ENCODE measurements at regions of chr2 and their contacts with region 1.

Region 1: GRCh38 chr2:152335010-152335725 is at the start of gene FMNL2:
- DNase-seq: peak; percentile 89 to 93
- H3K4me3 ChIP-seq: peak within 1 kb of the TSS; percentile 96 to 98
- H3K27ac ChIP-seq: peak within 1 kb of the TSS; percentile 89 to 93
- H3K4me1 ChIP-seq: peaks cover 0 to 34% (median 9%) of the 10 kb centered on the region in 4 donors
- H3K27me3 ChIP-seq: no peaks in the 10 kb centered on the region
- CTCF ChIP-seq: peak in 1 of 2 experiments; percentile 10

Region 2: GRCh38 chr2:152189622-152190495 is 145.3 kb before region 1 on chr2:
- intact Hi-C with region 1: loop called (anchors 10 kb)
- DNase-seq: peak in 1 of 2 donors; percentile 46
- H3K4me3 ChIP-seq: no peak overlapping the region
- H3K27ac ChIP-seq: no peak overlapping the region
- H3K4me1 ChIP-seq: peaks cover 0 to 5% (median 0%) of the 10 kb centered on the region in 4 donors
- H3K27me3 ChIP-seq: no peaks in the 10 kb centered on the region
- CTCF ChIP-seq: peak; percentile 88 to 89

Region 3: GRCh38 chr2:152222975-152223637 is 112.1 kb before region 1 on chr2:
- intact Hi-C with region 1: loop called (anchors 10 kb)
- DNase-seq: peak; percentile 73 to 74
- H3K4me3 ChIP-seq: no peak overlapping the region
- H3K27ac ChIP-seq: peak overlapping the region; percentile 67 to 71
- H3K4me1 ChIP-seq: peaks cover 0 to 30% (median 14%) of the 10 kb centered on the region in 4 donors
- H3K27me3 ChIP-seq: no peaks in the 10 kb centered on the region
- CTCF ChIP-seq: no peak

Region 4: GRCh38 chr2:152395103-152395502 is 59.9 kb after region 1 on chr2:
- intact Hi-C with region 1: loop called (anchors 5 kb)
- DNase-seq: peak in 1 of 2 donors; percentile 33
- H3K4me3 ChIP-seq: peak overlapping the region in 1 of 2 donors; percentile 45
- H3K27ac ChIP-seq: peak overlapping the region; percentile 65 to 72
- H3K4me1 ChIP-seq: peaks cover 0 to 40% (median 24%) of the 10 kb centered on the region in 4 donors
- H3K27me3 ChIP-seq: no peaks in the 10 kb centered on the region
- CTCF ChIP-seq: no peak

Region 5: GRCh38 chr2:152466020-152466419 is 130.9 kb after region 1 on chr2:
- intact Hi-C with region 1: no loop called
- DNase-seq: no peak
- H3K4me3 ChIP-seq: no peak overlapping the region
- H3K27ac ChIP-seq: no peak overlapping the region
- H3K4me1 ChIP-seq: peaks cover 0 to 64% (median 33%) of the 10 kb centered on the region in 4 donors
- H3K27me3 ChIP-seq: no peaks in the 10 kb centered on the region
- CTCF ChIP-seq: no peak

Region 6: GRCh38 chr2:152627351-152627957 is 292.3 kb after region 1 on chr2:
- intact Hi-C with region 1: loop called (anchors 10 kb)
- DNase-seq: no peak
- H3K4me3 ChIP-seq: no peak overlapping the region
- H3K27ac ChIP-seq: peak overlapping the region in 1 of 2 donors; percentile 30
- H3K4me1 ChIP-seq: peaks cover 0 to 8% (median 0%) of the 10 kb centered on the region in 4 donors
- H3K27me3 ChIP-seq: no peaks in the 10 kb centered on the region
- CTCF ChIP-seq: peak; percentile 59 to 61